ENCODE measurements at regions of chr19 and their contacts with region 1.

Region 1: DNA sequence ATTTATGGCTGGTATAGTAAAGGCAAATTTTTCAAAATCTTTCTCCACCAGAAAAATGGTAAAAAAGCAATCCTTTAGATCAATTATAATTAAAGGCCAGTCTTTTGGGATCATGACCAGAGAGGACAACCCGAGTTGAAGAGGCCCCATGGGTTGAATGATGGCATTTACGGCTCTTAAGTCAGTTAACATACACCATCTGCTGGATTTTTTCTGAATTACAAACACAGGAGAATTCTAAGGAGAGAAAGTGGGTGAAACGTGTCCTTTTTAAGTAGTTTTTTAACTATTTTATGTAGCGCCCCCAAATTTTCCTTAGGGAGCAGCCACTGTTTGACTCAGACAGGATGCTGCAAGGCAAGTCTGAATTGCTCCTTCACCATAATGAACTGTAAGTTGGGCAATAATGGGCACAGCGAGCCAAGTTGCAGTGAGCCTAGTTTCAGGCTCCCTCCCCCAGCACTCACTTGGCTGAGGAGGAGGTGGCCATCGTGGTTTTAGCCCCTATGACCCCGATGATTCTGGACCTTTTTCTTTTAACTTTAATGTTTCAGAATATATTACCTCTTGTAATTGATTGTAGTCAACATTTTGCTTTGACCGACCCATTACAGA is 13.6 kb upstream of the ZNF611 start:
- DNase-seq: peak; percentile 34
- H3K4me3 ChIP-seq: no peak overlapping the region
- H3K27ac ChIP-seq: no peak overlapping the region
- H3K4me1 ChIP-seq: no peaks in the 10 kb centered on the region
- H3K27me3 ChIP-seq: no peaks in the 10 kb centered on the region
- CTCF ChIP-seq: peak; percentile 23 to 43

Region 2: DNA sequence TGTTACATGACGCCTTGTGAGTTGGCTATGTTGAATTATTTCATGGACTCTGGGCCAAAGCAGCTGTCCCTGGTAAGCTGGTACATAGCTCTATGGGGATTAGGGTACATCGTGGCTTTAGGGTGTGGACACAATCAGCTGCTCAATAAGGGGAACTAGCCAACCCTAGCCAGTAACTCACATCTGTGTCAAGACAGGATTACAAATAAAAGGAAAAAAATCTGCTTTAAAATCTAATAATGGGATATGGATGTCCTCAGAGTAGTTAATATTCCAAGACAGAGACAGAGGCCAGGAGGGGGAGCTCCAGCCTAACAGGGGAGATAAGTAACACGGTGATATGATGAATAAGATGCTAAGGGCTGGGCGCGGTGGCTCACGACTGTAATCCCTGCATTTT is 500.2 kb before region 1 on chr19:
- CTCF ChIA-PET with region 1: no interaction called
- dilution Hi-C with region 1: no loop called
- in situ Hi-C with region 1: loop called (anchors 25 kb)
- intact Hi-C with region 1: loop called (anchors 1 kb)
- DNase-seq: peak; percentile 42
- H3K4me3 ChIP-seq: no peak overlapping the region
- H3K27ac ChIP-seq: no peak overlapping the region
- H3K4me1 ChIP-seq: no peaks in the 10 kb centered on the region
- H3K27me3 ChIP-seq: no peaks in the 10 kb centered on the region
- CTCF ChIP-seq: peak; percentile 24 to 64

Region 3: DNA sequence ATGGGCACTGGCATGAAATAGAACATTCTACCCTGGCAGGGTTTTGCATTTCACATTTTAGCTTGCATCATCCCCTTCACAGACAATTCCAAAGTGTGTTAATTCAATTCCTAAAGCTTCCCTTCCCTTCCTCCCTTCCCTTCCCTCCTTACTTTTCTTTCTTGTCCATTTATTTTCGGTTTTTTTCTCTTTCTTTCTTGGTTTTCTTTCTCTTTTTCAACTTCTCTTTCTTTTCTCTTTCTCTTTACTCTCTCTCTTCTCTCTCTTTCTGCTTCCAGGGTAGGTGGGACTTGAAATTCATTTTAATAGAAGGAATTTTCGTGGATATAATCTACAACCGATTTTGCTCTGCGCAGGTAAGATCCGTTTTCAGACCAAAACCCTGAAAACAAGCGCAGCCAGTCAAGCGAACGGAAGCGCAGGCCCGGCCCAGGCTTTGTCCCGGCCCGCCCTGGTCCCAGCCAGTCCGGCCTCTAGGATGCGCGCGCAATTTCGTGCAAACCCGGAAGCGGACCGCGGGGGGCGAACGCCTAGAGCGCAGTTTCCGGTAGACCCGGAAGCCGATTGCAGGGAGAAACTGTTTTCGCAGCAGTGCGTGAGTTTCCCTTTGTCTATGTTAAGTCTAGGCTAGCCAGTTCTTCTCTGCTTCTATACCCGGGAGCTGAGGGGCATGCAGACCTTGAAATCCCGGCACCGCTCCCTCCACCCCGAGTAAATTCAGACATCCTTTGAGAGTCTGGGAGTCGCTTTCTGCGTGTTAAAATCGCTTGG is 350.9 kb before region 1 on chr19 and contains the start of gene ZNF528:
- CTCF ChIA-PET with region 1: no interaction called
- dilution Hi-C with region 1: no loop called
- in situ Hi-C with region 1: no loop called
- intact Hi-C with region 1: loop called (anchors 1 kb)
- DNase-seq: peak; percentile 91
- H3K4me3 ChIP-seq: peak within 1 kb of the TSS; percentile 34 to 53 (median 42)
- H3K27ac ChIP-seq: no peak within 1 kb of the TSS
- H3K4me1 ChIP-seq: no peaks in the 10 kb centered on the region
- H3K27me3 ChIP-seq: no peaks in the 10 kb centered on the region
- CTCF ChIP-seq: no peak
- total RNA-seq, gene ZNF528: 16.1 to 28.8 TPM

Region 4: DNA sequence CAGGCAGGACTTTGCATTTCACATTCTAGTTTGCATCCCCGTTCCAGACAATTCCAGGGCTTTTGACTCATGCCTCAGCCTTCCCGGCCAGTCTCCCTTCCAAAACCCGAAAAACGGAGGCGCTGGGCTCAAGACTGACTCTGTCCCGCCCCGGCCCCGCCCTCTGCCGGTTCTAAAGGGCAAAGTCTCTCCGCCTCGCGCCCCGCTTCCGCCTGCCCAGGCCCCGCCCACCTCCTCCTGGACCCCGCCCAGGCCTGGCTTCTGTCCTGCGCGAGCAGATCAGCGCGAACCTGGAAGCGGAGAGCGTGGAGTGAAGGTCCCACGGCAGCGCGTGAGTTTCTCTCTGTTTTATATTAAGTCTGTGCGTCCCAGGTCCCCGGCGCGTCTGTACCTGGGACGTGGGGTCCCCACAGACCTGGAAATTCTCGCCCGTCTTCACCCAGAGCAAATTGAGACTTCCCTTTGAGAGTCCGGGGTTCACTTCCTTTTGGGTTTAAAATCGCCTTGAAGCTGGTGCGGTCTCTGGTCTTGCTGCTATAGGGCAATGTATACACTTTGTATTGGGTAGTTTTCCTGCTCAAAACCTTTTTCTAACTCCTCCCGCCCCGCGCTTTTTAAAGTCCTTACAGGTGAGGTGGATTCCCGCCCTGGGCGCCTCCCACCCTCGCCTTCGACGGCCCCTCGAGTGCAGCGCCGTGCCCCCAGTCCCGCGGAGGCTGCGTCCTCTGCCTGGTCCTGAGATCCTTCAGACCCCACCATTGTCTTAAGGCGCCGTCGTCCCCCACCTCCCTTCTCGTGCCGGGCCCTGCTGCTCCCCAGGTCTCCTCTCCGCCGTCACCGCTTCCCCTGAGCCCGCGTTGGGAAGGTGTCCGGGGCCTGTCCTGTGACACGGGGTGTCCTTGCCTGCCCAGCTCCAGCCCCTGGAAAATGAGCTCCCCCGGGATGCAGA is 147.1 kb before region 1 on chr19:
- CTCF ChIA-PET with region 1: no interaction called
- dilution Hi-C with region 1: no loop called
- in situ Hi-C with region 1: no loop called
- intact Hi-C with region 1: loop called (anchors 5 kb)
- DNase-seq: peak; percentile 89
- H3K4me3 ChIP-seq: peak overlapping the region; percentile 63 to 69 (median 66)
- H3K27ac ChIP-seq: peak overlapping the region; percentile 3
- H3K4me1 ChIP-seq: peaks cover 12% of the 10 kb centered on the region
- H3K27me3 ChIP-seq: no peaks in the 10 kb centered on the region
- CTCF ChIP-seq: peak in 1 of 2 donors; percentile 42

Region 5: DNA sequence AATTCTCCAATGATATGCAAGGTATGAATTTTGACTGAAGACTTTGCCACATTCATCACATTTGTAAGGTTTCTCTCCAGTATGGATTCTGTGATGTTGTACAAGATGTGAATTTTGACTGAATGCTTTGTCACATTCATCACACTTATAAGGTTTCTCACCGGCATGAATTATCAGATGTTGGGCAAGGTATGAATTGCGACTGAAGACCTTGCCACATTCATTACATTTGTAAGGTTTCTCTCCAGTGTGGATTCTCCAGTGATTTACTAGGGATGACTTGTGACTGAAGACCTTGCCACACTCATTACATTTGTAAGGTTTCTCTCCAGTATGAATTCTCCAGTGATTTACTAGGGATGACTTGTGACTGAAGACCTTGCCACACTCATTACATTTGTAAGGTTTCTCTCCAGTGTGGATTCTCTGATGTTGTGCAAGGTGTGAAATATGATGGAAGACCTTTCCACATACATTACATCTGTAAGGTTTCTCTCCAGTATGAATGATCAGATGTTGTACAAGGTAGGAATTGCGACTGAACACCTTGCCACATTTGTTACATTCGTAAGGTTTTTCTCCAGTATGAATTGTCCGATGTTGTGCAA is 135.0 kb before region 1 on chr19:
- CTCF ChIA-PET with region 1: no interaction called
- dilution Hi-C with region 1: no loop called
- in situ Hi-C with region 1: no loop called
- intact Hi-C with region 1: no loop called
- DNase-seq: no peak
- H3K4me3 ChIP-seq: no peak overlapping the region
- H3K27ac ChIP-seq: no peak overlapping the region
- H3K4me1 ChIP-seq: no peaks in the 10 kb centered on the region
- H3K27me3 ChIP-seq: no peaks in the 10 kb centered on the region
- CTCF ChIP-seq: no peak

Region 6: GRCh38 chr19:52761696-52762095 is 13.3 kb after region 1 on chr19:
- CTCF ChIA-PET with region 1: no interaction called
- dilution Hi-C with region 1: no loop called
- in situ Hi-C with region 1: no loop called
- intact Hi-C with region 1: no loop called
- DNase-seq: no peak
- H3K4me3 ChIP-seq: no peak overlapping the region
- H3K27ac ChIP-seq: no peak overlapping the region
- H3K4me1 ChIP-seq: no peaks in the 10 kb centered on the region
- H3K27me3 ChIP-seq: no peaks in the 10 kb centered on the region
- CTCF ChIP-seq: no peak